ENCODE measurements at regions of chr11 and their contacts with region 1.

Region 1: DNA sequence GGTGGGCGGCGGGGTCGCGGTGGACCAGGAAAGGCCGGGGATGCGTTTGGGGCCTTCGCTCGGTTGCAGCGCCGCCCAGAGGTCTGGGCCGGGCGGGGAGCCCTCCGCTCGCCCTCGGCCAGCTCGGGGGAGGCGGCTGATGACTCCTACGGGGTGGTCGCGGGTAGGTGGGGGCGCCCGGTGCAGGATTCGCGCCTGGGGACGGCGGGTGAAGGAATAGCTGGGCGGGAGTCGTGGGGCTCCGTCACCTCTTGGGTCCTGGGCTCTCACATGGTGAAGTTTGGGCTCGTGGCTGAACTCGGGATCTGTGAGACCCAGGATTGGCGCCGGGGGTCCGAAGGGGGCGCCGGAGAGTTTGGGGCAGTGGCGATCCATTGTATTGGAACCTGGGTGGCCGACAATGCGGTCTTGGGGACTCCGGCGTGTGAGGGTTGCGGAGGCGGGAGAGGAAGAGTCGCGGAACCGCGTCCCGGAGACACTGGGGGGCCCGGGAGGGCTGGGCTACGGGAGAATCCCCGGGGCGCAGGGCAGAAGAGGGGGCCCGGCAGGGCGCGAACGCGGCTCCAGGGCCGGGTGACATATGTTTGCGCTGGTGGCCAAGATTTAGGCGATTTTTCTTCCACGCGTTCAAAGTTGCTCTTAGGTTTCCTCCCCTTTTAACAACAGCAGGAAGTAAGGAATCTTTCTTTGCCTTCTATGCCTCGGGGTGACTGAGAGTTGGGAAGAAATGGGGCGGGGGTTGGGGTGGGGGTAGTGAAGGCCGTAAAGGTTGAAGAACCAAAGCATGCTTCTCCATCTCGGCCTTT is 935 bp downstream of the QSER1 start:
- DNase-seq: peak in 1 of 2 experiments; percentile 50
- H3K4me3 ChIP-seq: peak overlapping the region; percentile 91
- H3K27ac ChIP-seq: peak overlapping the region; percentile 63
- H3K4me1 ChIP-seq: peaks cover 34% of the 10 kb centered on the region
- H3K27me3 ChIP-seq: no peaks in the 10 kb centered on the region
- CTCF ChIP-seq: no peak; the same call in 1 of the 2 replicates

Region 2: GRCh38 chr11:31415435-31415834 is 1478.1 kb before region 1 on chr11:
- CTCF ChIA-PET with region 1: no interaction called
- POLR2A ChIA-PET with region 1: interaction called, 10 read pairs
- intact Hi-C with region 1: no loop called
- DNase-seq: no peak
- H3K4me3 ChIP-seq: no peak overlapping the region
- H3K27ac ChIP-seq: no peak overlapping the region
- H3K4me1 ChIP-seq: no peaks in the 10 kb centered on the region
- H3K27me3 ChIP-seq: no peaks in the 10 kb centered on the region
- CTCF ChIP-seq: no peak

Region 3: GRCh38 chr11:32583459-32584271 is 309.9 kb before region 1 on chr11 and contains the start of gene EIF3M:
- CTCF ChIA-PET with region 1: no interaction called
- POLR2A ChIA-PET with region 1: no interaction called
- intact Hi-C with region 1: loop called (anchors 10 kb)
- DNase-seq: peak; percentile 92 to 97
- H3K4me3 ChIP-seq: peak within 1 kb of the TSS; percentile 92
- H3K27ac ChIP-seq: peak within 1 kb of the TSS; percentile 83
- H3K4me1 ChIP-seq: peaks cover 46% of the 10 kb centered on the region
- H3K27me3 ChIP-seq: no peaks in the 10 kb centered on the region
- CTCF ChIP-seq: no peak
- total RNA-seq, gene EIF3M: 322 and 357 TPM in 2 replicates

Region 4: DNA sequence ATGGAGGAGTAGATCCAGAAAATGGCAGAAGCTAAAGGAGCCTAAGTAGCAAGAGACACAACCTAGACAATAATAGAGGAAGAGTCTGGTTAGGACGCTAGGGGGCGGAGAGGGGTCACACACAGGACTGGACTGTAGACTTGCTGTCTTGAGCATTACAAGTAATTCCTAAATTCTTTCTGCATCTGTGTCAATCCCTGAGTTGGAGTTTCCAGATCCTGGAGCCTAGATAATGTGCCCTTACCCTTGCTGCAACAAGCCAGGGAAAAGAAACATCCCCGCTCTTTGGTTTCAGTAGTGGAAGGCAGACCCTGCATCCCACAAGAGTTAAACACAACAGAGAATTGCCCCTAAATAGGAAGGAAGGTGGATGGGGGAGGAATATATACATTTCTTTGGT is 84.2 kb before region 1 on chr11:
- CTCF ChIA-PET with region 1: interaction called, 7 read pairs
- POLR2A ChIA-PET with region 1: no interaction called
- intact Hi-C with region 1: loop called (anchors 5 kb)
- DNase-seq: peak; percentile 66 to 73
- H3K4me3 ChIP-seq: no peak overlapping the region
- H3K27ac ChIP-seq: no peak overlapping the region
- H3K4me1 ChIP-seq: no peaks in the 10 kb centered on the region
- H3K27me3 ChIP-seq: no peaks in the 10 kb centered on the region
- CTCF ChIP-seq: peak; percentile 94

Region 5: GRCh38 chr11:32829680-32830412 is 63.7 kb before region 1 on chr11 and contains the start of gene PRRG4:
- CTCF ChIA-PET with region 1: no interaction called
- POLR2A ChIA-PET with region 1: interaction called, 7 read pairs
- intact Hi-C with region 1: loop called (anchors 2 kb)
- DNase-seq: peak; percentile 77 to 95
- H3K4me3 ChIP-seq: peak within 1 kb of the TSS; percentile 72
- H3K27ac ChIP-seq: peak within 1 kb of the TSS; percentile 57
- H3K4me1 ChIP-seq: peaks cover 14% of the 10 kb centered on the region
- H3K27me3 ChIP-seq: no peaks in the 10 kb centered on the region
- CTCF ChIP-seq: no peak
- total RNA-seq, gene PRRG4: 11.5 and 11.9 TPM in 2 replicates

Region 6: GRCh38 chr11:32852207-32852606 is 41.3 kb before region 1 on chr11:
- CTCF ChIA-PET with region 1: no interaction called
- POLR2A ChIA-PET with region 1: interaction called, 15 read pairs
- intact Hi-C with region 1: no loop called
- DNase-seq: no peak
- H3K4me3 ChIP-seq: no peak overlapping the region
- H3K27ac ChIP-seq: no peak overlapping the region
- H3K4me1 ChIP-seq: no peaks in the 10 kb centered on the region
- H3K27me3 ChIP-seq: no peaks in the 10 kb centered on the region
- CTCF ChIP-seq: no peak

Region 7: GRCh38 chr11:32920570-32920969 is 27.0 kb after region 1 on chr11:
- CTCF ChIA-PET with region 1: no interaction called
- POLR2A ChIA-PET with region 1: no interaction called
- intact Hi-C with region 1: no loop called
- DNase-seq: no peak
- H3K4me3 ChIP-seq: no peak overlapping the region
- H3K27ac ChIP-seq: no peak overlapping the region
- H3K4me1 ChIP-seq: peaks cover 16% of the 10 kb centered on the region
- H3K27me3 ChIP-seq: no peaks in the 10 kb centered on the region
- CTCF ChIP-seq: no peak

Region 8: DNA sequence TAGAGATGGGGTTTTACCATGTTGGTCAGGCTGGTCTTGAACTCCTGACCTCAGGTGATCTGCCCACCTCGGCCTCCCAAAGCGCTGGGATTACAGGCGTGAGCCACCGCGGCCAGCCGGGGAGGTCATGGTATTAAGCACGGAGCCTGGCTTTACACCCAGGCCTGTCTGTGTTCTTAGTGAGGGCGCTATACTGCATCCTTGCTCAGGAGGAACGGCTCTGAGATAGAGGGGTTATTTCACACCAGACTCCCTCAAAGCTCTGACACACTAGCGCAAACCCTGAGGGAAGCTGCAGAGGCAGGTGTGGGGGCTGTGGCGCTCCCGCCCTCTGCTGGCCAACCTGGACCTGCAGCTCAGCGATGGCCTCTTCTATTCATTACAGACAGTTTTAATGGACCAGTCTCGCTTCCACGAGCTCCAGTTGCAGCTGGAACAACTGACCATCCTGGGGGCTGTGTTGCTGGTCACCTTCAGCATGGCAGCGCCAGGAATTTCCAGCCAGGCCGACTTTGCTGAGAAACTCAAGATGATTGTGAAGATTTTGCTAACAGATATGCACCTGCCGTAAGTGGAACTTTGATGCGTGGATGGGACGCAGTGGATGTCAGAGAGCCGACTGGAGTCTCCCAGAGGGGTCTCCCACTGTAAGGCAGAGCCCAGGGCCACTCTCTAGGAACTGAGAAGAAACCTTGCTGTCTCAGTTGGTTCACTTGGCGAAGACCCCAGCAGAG is 172.1 kb after region 1 on chr11:
- CTCF ChIA-PET with region 1: no interaction called
- POLR2A ChIA-PET with region 1: no interaction called
- intact Hi-C with region 1: loop called (anchors 10 kb)
- DNase-seq: peak in 1 of 2 experiments; percentile 54
- H3K4me3 ChIP-seq: no peak overlapping the region
- H3K27ac ChIP-seq: no peak overlapping the region
- H3K4me1 ChIP-seq: no peaks in the 10 kb centered on the region
- H3K27me3 ChIP-seq: no peaks in the 10 kb centered on the region
- CTCF ChIP-seq: peak; percentile 90

Measured in PC-9 (cell line).